ENCODE measurements at regions of chr16 and their contacts with region 1.

Region 1: DNA sequence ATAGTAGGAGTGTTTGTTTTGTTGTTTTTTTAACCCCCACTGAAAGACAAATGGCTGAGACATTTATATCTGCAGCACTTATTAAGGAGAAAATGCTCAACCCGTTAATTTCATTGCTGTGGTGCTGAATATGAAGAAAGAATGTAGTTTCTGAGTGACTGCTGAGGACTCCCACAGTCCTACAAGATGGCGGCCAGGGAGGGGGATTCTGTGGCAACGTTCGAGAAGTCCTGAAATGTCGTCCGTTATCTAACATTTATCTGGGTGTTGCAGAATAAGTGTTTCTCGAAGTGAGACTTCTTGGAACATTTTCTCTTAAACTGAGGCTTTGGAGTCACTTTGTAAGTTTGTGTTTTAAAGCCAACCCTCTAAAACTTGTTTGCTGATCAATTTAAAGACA is 530.4 kb downstream of the XYLT1 start:
- DNase-seq: no peak
- H3K4me3 ChIP-seq: no peak overlapping the region
- H3K27ac ChIP-seq: no peak overlapping the region
- H3K4me1 ChIP-seq: no peaks in the 10 kb centered on the region
- H3K27me3 ChIP-seq: no peaks in the 10 kb centered on the region
- CTCF ChIP-seq: no peak

Region 2: DNA sequence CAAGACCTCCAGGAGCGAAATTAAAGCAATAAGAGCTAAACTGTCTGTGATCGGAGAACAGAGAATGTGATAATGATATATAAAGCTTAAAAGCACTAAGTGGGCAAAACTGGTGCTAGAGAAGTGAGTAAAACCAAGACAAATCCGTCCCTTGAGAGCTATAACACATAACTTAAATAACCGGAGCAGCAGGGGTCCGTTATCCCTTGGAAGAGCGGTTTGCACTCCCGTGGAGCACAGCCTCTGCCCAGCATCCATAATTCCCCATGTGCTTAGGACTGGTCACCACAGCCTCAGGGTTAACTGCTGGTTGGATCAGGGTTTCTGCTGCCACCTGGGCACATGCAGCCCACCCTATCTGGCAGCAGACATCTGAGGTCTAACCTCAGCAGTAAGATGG is 72.4 kb before region 1 on chr16:
- CTCF ChIA-PET with region 1: no interaction called
- dilution Hi-C with region 1: loop called (anchors 5 kb)
- in situ Hi-C with region 1: no loop called
- intact Hi-C with region 1: no loop called
- DNase-seq: no peak
- H3K4me3 ChIP-seq: no peak overlapping the region
- H3K27ac ChIP-seq: no peak overlapping the region
- H3K4me1 ChIP-seq: no peaks in the 10 kb centered on the region
- H3K27me3 ChIP-seq: no peaks in the 10 kb centered on the region
- CTCF ChIP-seq: no peak

Region 3: DNA sequence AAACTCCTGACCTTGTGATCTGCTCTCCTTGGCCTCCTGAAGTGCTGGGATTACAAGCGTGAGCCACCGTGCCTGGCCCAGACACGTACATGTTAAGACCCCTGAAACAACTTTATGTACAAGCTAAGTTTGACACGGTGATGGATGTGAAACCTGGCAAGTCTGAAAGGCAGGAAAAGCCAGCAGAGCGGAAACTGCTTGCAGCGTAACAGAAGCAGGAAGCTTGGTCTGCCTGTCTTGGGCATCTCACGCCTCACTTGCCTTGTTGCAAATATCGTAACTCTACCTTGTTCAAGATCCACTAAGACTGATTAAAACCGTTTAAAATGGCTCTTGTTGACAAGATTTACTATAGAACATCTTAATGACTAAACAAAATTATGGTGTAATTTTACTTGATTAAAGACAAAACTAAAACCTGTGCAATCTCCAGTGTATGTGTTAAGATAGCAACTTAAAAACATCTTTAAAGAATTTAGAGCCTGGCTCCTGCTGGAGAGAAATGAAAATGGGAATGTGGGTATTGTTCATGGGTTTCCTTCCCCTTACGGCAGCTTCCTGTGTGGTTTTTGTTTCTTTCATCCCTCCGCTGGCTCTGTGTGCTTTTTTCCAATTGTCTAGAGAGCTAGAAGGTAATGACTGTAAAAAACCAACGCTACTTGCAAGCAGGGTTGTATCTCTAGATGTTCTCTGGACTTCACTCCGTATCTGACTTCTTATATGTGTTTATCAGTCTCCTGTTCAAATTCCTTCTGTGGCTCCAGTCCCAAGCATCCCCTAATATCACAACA is 52.8 kb after region 1 on chr16:
- CTCF ChIA-PET with region 1: no interaction called
- dilution Hi-C with region 1: no loop called
- in situ Hi-C with region 1: no loop called
- intact Hi-C with region 1: no loop called
- DNase-seq: no peak
- H3K4me3 ChIP-seq: no peak overlapping the region
- H3K27ac ChIP-seq: no peak overlapping the region
- H3K4me1 ChIP-seq: no peaks in the 10 kb centered on the region
- H3K27me3 ChIP-seq: no peaks in the 10 kb centered on the region
- CTCF ChIP-seq: no peak